H1 (cell line): ENCODE measurements at regions of chr4 and their contacts with region 1.

Region 1: GRCh38 chr4:89434364-89434988 is 126.9 kb upstream of the GPRIN3 start:
- DNase-seq: no peak
- H3K4me3 ChIP-seq: no peak overlapping the region
- H3K27ac ChIP-seq: no peak overlapping the region
- H3K4me1 ChIP-seq: no peaks in the 10 kb centered on the region; a peak in 1 of 7 replicates
- H3K27me3 ChIP-seq: no peaks in the 10 kb centered on the region
- CTCF ChIP-seq: peak in 2 of 3 experiments; percentile 72 to 76; a peak in 3 of 4 replicates
- EP300 ChIP-seq: no peak
- POLR2A ChIP-seq: no peak
- RAD21 ChIP-seq: peak; percentile 87 to 90

Region 2: DNA sequence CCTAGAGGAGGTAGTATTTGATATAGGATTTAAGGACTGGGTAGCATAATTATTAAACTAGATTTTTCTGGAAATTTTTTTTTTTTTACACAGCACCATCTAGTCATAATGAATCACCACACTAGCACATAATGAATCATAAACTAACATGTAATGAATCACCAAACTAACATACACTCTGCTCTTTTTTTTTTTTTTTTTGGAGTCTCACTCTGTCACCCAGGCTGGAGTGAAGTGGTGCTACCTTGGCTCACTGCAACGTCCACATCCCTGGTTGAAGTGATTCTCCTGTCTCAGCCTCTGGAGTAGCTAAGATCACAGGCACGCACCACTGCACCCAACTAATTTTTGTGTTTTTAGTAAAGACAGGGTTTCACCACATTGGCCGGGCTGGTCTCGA is 470.0 kb before region 1 on chr4:
- CTCF ChIA-PET with region 1: no interaction called
- POLR2A ChIA-PET with region 1: no interaction called
- DNase-seq: no peak
- H3K4me3 ChIP-seq: no peak overlapping the region
- H3K27ac ChIP-seq: no peak overlapping the region
- H3K4me1 ChIP-seq: peaks cover 0 to 4% (median 2%) of the 10 kb centered on the region in 4 experiments; a peak in 3 of 7 replicates
- H3K27me3 ChIP-seq: no peaks in the 10 kb centered on the region
- CTCF ChIP-seq: no peak
- EP300 ChIP-seq: no peak
- POLR2A ChIP-seq: no peak
- RAD21 ChIP-seq: no peak

Region 3: GRCh38 chr4:89248879-89249281 is 185.6 kb before region 1 on chr4:
- CTCF ChIA-PET with region 1: interaction called, 10 read pairs
- POLR2A ChIA-PET with region 1: no interaction called
- DNase-seq: no peak
- H3K4me3 ChIP-seq: no peak overlapping the region
- H3K27ac ChIP-seq: no peak overlapping the region
- H3K4me1 ChIP-seq: no peaks in the 10 kb centered on the region; a peak in 1 of 7 replicates
- H3K27me3 ChIP-seq: no peaks in the 10 kb centered on the region
- CTCF ChIP-seq: no peak
- EP300 ChIP-seq: no peak
- POLR2A ChIP-seq: no peak
- RAD21 ChIP-seq: no peak

Region 4: DNA sequence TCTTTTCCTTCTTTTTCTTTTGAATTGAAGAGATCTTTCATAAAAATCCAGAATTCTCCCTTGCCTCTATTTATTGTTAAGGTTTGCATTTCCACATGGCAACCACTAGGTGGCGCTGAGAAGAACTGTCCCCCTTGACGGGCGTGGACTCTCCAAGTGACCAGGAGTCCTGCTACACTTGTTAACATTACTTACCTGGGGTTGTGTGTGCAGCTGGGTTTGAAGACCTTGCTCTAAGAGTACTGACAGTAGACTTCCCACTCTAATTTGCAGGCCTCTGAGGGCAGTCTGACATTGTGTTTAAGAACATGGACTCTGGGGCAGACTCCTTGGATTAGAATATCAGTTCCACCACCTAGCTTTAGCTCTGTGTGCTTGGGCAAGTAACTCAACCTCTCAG is 179.6 kb before region 1 on chr4:
- CTCF ChIA-PET with region 1: interaction called, 10 read pairs
- POLR2A ChIA-PET with region 1: no interaction called
- DNase-seq: peak in 1 of 2 experiments; percentile 63
- H3K4me3 ChIP-seq: no peak overlapping the region
- H3K27ac ChIP-seq: no peak overlapping the region
- H3K4me1 ChIP-seq: peaks cover 0 to 5% (median 3%) of the 10 kb centered on the region in 4 experiments; a peak in 5 of 7 replicates
- H3K27me3 ChIP-seq: no peaks in the 10 kb centered on the region
- CTCF ChIP-seq: peak; percentile 73 to 74 (median 74)
- EP300 ChIP-seq: no peak
- POLR2A ChIP-seq: no peak
- RAD21 ChIP-seq: peak; percentile 59 to 70

Region 5: GRCh38 chr4:89353514-89353913 is 81.0 kb before region 1 on chr4:
- CTCF ChIA-PET with region 1: no interaction called
- POLR2A ChIA-PET with region 1: no interaction called
- DNase-seq: no peak
- H3K4me3 ChIP-seq: no peak overlapping the region
- H3K27ac ChIP-seq: no peak overlapping the region
- H3K4me1 ChIP-seq: no peaks in the 10 kb centered on the region
- H3K27me3 ChIP-seq: no peaks in the 10 kb centered on the region
- CTCF ChIP-seq: no peak
- EP300 ChIP-seq: no peak
- POLR2A ChIP-seq: no peak
- RAD21 ChIP-seq: peak in 1 of 2 experiments; percentile 7; a peak in 1 of 4 replicates

Region 6: DNA sequence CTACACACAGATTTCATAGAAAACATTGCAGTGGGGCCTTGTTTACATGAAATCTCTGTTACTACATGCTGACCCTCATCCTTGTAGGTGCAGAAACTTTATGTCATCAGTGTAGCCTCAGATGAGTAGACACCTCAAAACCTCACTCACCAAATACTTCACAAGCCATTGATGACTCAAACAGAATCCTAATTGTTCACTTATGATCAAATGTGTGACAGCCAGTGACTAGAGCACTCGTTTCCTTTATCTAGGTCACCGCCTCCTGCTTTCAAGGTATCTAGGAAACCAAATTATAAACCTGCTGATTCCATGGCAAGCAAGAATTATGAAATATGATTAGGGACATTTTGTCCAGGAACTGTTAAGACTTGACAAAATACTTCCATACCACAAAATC is 129.0 kb after region 1 on chr4:
- CTCF ChIA-PET with region 1: no interaction called
- POLR2A ChIA-PET with region 1: no interaction called
- DNase-seq: no peak
- H3K4me3 ChIP-seq: no peak overlapping the region
- H3K27ac ChIP-seq: no peak overlapping the region
- H3K4me1 ChIP-seq: peaks cover 0 to 7% (median 2%) of the 10 kb centered on the region in 4 experiments; a peak in 2 of 7 replicates
- H3K27me3 ChIP-seq: peaks cover 0 to 8% (median 2%) of the 10 kb centered on the region in 4 experiments; a peak in 3 of 7 replicates
- CTCF ChIP-seq: no peak
- EP300 ChIP-seq: no peak
- POLR2A ChIP-seq: no peak
- RAD21 ChIP-seq: no peak

Region 7: GRCh38 chr4:89829470-89830138 is 395.1 kb after region 1 on chr4:
- CTCF ChIA-PET with region 1: no interaction called
- POLR2A ChIA-PET with region 1: no interaction called
- DNase-seq: no peak
- H3K4me3 ChIP-seq: no peak overlapping the region
- H3K27ac ChIP-seq: no peak overlapping the region
- H3K4me1 ChIP-seq: peaks cover 0 to 2% (median 0%) of the 10 kb centered on the region in 4 experiments; a peak in 1 of 7 replicates
- H3K27me3 ChIP-seq: no peaks in the 10 kb centered on the region
- CTCF ChIP-seq: no peak
- EP300 ChIP-seq: no peak
- POLR2A ChIP-seq: no peak
- RAD21 ChIP-seq: no peak